ENCODE measurements at regions of chr6 and their contacts with region 1.

Region 1: GRCh38 chr6:116531675-116532570 is 13.6 kb downstream of the TRAPPC3L start:
- DNase-seq: peak; percentile 55 to 75
- ATAC-seq: peak; percentile 90
- H3K4me3 ChIP-seq: no peak overlapping the region
- H3K27ac ChIP-seq: no peak overlapping the region
- H3K4me1 ChIP-seq: no peaks in the 10 kb centered on the region
- H3K27me3 ChIP-seq: no peaks in the 10 kb centered on the region

Region 2: GRCh38 chr6:116217069-116217468 is 314.9 kb before region 1 on chr6:
- intact Hi-C with region 1: loop called in 1 of 2 experiments (anchors 5 kb)
- DNase-seq: no peak
- ATAC-seq: no peak
- H3K4me3 ChIP-seq: no peak overlapping the region
- H3K27ac ChIP-seq: no peak overlapping the region
- H3K4me1 ChIP-seq: no peaks in the 10 kb centered on the region
- H3K27me3 ChIP-seq: no peaks in the 10 kb centered on the region

Region 3: DNA sequence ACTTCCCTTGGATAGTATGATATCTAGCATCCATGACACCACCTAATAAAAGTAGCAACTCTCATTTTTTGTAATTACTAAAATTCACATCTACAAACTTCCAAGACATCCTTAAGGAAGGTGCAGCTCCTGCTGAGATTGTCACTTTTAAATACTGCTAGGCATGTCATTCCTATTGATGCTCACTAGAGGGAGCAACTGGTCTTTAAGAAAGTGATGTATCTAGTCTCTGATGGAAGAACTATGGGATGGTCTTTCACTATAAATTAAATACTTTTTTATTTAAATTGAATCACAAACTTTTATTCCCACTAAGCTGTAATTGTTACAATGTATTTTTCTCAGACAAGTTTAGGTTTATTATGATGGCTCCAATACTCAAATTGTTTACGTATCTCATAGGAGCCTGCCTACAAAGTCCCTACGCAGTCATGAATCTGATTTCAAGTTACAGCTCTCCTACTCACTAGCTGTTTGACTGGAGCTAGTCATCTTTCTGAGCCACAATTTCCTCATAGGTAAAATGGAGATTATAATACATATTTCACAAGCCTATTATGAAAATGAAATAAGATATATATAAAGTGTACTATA is 244.1 kb before region 1 on chr6:
- intact Hi-C with region 1: loop called (anchors 2 to 5 kb)
- DNase-seq: no peak
- ATAC-seq: no peak
- H3K4me3 ChIP-seq: no peak overlapping the region
- H3K27ac ChIP-seq: no peak overlapping the region
- H3K4me1 ChIP-seq: no peaks in the 10 kb centered on the region
- H3K27me3 ChIP-seq: no peaks in the 10 kb centered on the region

Region 4: DNA sequence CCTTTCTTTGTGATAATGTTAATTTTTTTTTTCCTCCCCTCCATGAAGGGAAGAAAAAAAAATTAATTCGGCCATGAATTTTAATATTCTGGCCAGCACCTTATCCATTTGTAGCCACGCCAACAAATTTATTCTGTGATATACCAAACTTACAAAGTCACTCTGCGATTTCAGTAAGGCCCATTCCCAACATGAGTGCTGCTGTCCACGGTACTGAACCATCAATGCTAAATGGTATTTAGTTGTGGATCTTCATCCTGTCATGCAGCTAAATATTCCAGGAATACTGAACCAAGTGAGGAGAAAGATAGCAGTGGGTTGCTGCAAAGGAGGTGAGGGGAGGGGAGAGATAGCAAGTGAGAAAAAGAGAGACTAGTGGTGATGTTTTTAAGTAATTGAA is 64.9 kb after region 1 on chr6:
- intact Hi-C with region 1: no loop called
- DNase-seq: no peak
- ATAC-seq: no peak
- H3K4me3 ChIP-seq: no peak overlapping the region
- H3K27ac ChIP-seq: no peak overlapping the region
- H3K4me1 ChIP-seq: no peaks in the 10 kb centered on the region
- H3K27me3 ChIP-seq: no peaks in the 10 kb centered on the region

Region 5: GRCh38 chr6:116847227-116847626 is 315.3 kb after region 1 on chr6:
- intact Hi-C with region 1: loop called in 1 of 2 experiments (anchors 10 kb)
- DNase-seq: no peak
- ATAC-seq: no peak
- H3K4me3 ChIP-seq: no peak overlapping the region
- H3K27ac ChIP-seq: no peak overlapping the region
- H3K4me1 ChIP-seq: no peaks in the 10 kb centered on the region
- H3K27me3 ChIP-seq: no peaks in the 10 kb centered on the region

Region 6: DNA sequence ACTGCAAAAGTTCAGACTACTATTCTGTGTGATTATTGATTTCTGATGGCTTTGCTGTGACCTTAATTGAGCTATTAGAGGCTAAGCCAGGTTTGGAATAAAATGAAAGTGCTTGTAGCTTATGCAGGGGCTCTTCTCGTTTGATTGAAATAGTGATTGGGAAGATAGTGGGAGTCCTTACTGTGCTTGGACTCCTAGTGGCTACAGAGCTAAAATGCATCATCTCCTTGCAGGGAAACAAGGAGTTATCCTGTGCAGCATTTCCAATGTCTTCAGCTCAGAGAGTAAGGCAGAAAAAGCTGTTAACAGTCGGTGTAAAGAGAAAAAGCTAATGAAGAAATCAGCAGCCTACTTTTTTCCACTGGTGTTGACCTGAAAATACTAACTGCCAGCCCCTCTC is 1548.6 kb after region 1 on chr6:
- intact Hi-C with region 1: no loop called
- DNase-seq: no peak
- ATAC-seq: no peak
- H3K4me3 ChIP-seq: no peak overlapping the region
- H3K27ac ChIP-seq: no peak overlapping the region
- H3K4me1 ChIP-seq: no peaks in the 10 kb centered on the region
- H3K27me3 ChIP-seq: no peaks in the 10 kb centered on the region

Measured in aorta (tissue), 5 donors.